ENCODE measurements at regions of chr14 and their contacts with region 1.

Region 1: GRCh38 chr14:70086685-70087379 is 101.9 kb downstream of the SLC8A3 start:
- DNase-seq: peak; percentile 35 to 71 (median 51)
- H3K4me3 ChIP-seq: no peak overlapping the region
- H3K27ac ChIP-seq: no peak overlapping the region
- H3K4me1 ChIP-seq: no peaks in the 10 kb centered on the region
- H3K27me3 ChIP-seq: peaks cover 4% of the 10 kb centered on the region
- CTCF ChIP-seq: peak; percentile 31 to 64 (median 58)
- POLR2A ChIP-seq: no peak

Region 2: DNA sequence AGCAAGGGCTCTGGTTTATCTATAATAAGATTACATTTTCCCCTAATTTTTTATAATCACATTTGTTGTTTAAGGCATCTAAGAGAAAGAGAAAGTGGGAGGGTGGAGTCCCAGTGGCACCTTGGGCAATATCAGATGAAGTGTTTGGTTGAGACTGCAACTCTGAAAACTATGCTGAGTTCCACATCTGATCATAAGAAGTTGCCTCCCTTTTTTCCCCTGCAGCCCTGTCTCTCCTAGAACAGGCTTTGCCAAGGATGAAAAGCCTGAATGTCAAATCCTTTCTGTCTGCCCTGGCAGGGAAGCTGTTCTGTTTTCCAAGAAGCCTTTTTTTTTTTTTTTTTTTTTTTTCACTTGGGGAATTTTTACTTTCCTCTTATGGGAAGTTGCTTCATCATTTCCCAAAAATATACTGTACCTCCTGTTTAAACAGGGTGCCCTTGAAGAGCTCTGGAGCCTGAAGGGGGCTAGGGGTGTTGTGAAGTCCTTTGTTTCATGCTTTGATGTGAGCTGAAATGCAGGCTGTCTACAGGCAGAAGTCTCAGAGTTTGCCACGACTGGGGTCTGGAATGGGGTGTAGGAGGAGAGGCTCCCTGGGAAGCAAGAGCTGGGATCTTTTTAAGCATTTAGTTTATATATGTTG is 404.1 kb before region 1 on chr14:
- intact Hi-C with region 1: no loop called
- DNase-seq: peak in 5 of 7 donors; percentile 31 to 60 (median 53)
- H3K4me3 ChIP-seq: no peak overlapping the region
- H3K27ac ChIP-seq: peak overlapping the region; percentile 23 to 64 (median 38)
- H3K4me1 ChIP-seq: peaks cover 37 to 68% of the 10 kb centered on the region in 2 donors
- H3K27me3 ChIP-seq: no peaks in the 10 kb centered on the region
- CTCF ChIP-seq: no peak
- POLR2A ChIP-seq: no peak

Region 3: DNA sequence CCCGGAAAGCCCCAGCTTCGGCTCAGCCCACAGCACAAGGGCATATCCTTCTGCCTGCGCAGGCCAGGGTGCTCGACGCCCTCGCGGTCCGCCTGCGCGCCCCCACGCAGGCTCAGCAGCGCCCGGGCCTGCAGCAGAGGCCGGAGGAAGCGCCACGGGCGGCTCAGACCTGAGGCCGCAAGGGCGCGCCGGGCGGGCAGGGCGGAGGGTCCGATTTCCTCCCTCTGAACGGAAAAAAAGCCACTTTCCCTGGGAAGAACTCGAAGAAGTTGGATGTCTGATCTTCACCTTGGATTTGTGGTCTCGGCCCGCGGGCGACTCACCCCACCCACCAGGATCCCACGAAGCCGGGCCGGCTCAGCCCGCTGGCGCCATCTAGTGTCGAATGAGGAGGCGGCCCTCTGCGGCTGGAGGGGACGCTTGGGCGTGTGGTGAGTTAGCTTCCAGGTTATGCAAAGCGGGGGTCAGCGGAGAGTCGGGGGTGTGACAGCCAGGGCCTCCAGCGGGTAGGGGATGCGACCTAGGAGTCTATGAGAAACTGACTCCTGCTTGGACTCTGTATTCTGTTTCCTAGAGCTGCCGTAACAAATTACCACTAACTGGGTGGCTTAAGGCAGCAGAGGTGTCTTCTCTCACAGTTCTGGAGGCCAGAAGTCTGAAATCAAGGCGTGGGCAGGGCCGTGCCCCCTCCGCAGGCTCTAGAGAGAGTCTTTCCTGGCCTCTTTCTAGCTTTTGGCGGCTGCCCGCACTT is 359.9 kb before region 1 on chr14:
- intact Hi-C with region 1: no loop called
- DNase-seq: peak; percentile 71 to 91 (median 83)
- H3K4me3 ChIP-seq: peak overlapping the region in 2 of 4 donors; percentile 5 to 48
- H3K27ac ChIP-seq: peak overlapping the region in 3 of 5 donors; percentile 23 to 75 (median 53)
- H3K4me1 ChIP-seq: peaks cover 4 to 20% of the 10 kb centered on the region in 2 donors
- H3K27me3 ChIP-seq: no peaks in the 10 kb centered on the region
- CTCF ChIP-seq: peak; percentile 96 to 100 (median 98)
- POLR2A ChIP-seq: no peak

Region 4: DNA sequence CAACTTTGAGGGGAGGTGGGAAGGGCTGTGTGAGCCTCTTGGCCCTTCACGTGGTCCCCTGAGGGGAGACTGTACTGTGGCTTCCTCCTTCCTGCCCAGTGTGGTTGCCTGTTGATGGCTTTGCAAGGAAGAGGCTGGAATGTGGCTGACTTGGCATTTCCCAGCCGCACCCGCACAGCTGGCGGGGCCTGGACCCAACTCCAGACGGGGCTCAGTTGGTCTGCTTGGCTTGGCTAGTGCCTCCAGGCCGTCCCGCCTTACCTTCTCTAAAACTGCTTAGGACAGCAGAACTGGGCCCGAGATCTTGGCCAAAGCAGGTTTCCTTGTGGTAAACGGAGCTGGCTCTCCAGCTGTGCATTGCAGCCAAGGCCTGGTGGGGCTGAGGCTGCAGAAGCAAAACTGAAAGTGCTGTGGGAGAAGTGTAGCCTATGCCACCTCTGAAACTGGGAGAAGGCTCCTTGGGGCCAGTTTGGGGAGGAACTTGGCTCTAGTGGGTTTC is 68.1 kb before region 1 on chr14:
- intact Hi-C with region 1: no loop called
- DNase-seq: peak in 6 of 7 donors; percentile 15 to 68 (median 24)
- H3K4me3 ChIP-seq: peak overlapping the region in 1 of 4 donors; percentile 5
- H3K27ac ChIP-seq: peak overlapping the region in 2 of 5 donors; percentile 14 to 68
- H3K4me1 ChIP-seq: no peaks in the 10 kb centered on the region
- H3K27me3 ChIP-seq: no peaks in the 10 kb centered on the region
- CTCF ChIP-seq: no peak
- POLR2A ChIP-seq: no peak

Region 5: GRCh38 chr14:70130482-70130881 is 43.6 kb after region 1 on chr14:
- intact Hi-C with region 1: no loop called
- DNase-seq: no peak
- H3K4me3 ChIP-seq: no peak overlapping the region
- H3K27ac ChIP-seq: no peak overlapping the region
- H3K4me1 ChIP-seq: no peaks in the 10 kb centered on the region
- H3K27me3 ChIP-seq: no peaks in the 10 kb centered on the region
- CTCF ChIP-seq: no peak
- POLR2A ChIP-seq: no peak

Region 6: DNA sequence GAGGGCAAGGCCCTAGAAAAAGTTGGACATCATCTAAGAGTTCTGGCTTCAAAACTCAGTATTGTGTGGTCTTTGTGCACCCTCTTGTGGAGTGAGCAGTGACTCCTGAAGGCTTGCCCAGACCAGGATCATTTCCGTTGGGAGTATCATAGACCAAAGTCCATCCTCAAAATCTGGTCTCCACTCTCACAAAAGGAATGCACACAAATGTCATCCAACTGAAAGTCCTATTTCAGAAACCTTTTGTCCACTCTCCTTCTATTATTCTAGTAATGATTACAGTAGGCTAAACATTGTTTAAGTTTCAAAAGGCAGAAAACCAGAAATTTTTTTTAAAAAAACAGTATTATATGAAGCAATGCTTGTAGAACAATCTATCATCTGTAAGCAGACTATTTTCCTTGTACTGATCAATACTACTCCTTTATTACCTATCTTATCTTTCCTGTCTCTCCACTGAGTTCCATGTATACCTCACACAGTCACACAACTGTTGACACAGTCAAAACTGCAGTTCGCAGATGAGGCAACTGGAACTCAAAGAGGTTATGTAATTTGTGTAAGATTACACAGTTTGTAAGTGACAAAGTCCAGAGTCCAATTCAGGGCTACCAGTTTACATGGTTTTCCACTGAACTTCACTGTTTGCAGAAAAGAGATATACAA is 231.3 kb after region 1 on chr14:
- intact Hi-C with region 1: loop called in 1 of 2 experiments (anchors 10 kb)
- DNase-seq: peak; percentile 22 to 61 (median 29)
- H3K4me3 ChIP-seq: no peak overlapping the region
- H3K27ac ChIP-seq: no peak overlapping the region
- H3K4me1 ChIP-seq: no peaks in the 10 kb centered on the region
- H3K27me3 ChIP-seq: no peaks in the 10 kb centered on the region
- CTCF ChIP-seq: peak; percentile 13 to 60 (median 46)
- POLR2A ChIP-seq: no peak

Measured in adrenal gland (tissue), 19 donors.